ENCODE measurements at regions of chr1 and their contacts with region 1.

Region 1: DNA sequence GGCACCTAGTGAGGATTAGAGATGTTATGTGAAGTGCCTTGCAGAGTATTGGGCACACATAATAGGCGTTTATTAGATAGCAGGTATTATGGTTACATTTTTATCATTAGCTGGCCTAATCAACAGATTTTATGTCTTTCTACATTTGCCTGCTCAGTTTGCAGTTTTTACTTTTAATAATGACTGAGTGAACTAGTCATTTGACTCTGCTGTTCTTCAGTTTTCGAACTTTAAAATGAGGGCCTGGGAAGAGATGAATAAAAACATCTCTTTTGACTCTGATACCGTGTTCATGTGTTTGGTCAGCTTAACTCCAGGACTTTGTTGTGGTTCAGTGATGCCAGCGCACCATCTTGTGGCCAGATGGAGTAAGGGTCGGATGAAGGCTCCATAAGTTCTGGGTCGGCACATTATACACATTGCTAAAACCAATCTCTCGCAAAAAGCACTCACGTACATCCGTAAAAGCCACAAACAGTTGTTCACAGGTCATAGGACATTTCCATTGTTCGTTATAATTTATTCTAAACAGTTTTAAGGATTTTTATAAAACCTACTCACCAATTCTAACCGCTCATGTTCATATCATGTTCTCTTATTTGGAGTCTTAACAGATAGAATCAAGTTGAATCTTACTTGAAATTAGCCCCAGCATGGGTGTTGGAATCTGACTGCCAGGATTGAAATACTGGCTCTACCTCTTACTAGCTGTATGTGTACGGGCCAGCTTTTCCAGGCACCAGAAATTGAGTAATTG is 78.4 kb upstream of the GPR88 start:
- DNase-seq: peak; percentile 69 to 73
- ATAC-seq: peak; percentile 70 to 91 (median 88)
- H3K4me3 ChIP-seq: no peak overlapping the region
- H3K27ac ChIP-seq: no peak overlapping the region
- H3K4me1 ChIP-seq: peaks cover 0 to 24% (median 8%) of the 10 kb centered on the region in 9 donors
- H3K27me3 ChIP-seq: no peaks in the 10 kb centered on the region
- CTCF ChIP-seq: peak; percentile 74 to 93 (median 86)

Region 2: DNA sequence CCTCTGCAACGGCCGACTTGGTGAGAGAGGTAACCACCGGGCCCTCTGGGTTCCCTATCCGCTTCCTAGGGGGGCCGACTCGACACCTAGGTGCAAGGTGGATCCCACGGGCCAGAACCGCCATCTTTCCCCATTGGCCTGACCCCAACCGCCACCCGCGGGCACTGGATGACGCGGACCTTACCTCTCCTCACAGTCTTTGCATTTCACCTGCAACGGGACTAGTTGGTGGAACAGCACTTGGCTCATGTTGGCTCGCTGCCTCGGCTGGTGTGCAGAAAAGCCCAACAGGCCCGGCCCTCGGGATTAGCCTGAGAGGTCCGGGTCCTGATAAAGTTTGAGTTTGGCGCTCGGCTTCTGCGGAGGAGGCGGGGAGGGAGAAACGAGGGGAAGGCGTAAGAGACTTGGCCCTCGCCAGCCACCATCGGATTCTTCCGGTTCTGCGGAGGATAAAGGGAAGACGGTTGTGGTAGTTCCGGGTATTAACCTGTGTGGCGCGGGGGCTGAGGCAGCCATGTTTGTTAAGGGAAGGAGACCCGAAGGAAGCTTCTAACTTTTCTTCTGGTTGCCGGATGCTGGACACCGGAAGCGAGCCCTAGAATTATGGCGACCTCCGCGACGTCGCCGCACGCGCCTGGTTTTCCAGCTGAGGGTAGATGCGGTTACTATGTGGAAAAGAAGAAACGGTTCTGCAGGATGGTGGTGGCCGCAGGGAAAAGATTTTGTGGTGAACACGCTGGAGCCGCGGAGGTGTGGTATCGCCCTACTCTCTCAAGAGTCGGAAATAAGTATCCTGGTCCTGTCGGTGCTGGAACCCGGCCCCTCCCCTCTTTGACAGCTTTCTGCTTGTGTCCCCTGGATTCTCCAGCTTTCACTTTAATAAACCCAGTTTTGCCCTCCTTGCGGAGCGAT is 326.7 kb before region 1 on chr1 and contains the starts of genes SASS6 and TRMT13:
- intact Hi-C with region 1: loop called in 1 of 10 experiments (anchors 10 kb)
- DNase-seq: peak; percentile 94 to 98
- ATAC-seq: peak; percentile 99 to 100 (median 100)
- H3K4me3 ChIP-seq: peak within 1 kb of the TSS; percentile 65 to 93 (median 82)
- H3K27ac ChIP-seq: peak within 1 kb of the TSS in 9 of 10 donors; percentile 59 to 86 (median 76)
- H3K4me1 ChIP-seq: peaks cover 5 to 41% (median 27%) of the 10 kb centered on the region in 9 donors
- H3K27me3 ChIP-seq: no peaks in the 10 kb centered on the region
- CTCF ChIP-seq: peak in 1 of 9 donors; percentile 17
- total RNA-seq, gene SASS6: 0.95 to 2.7 (median 1.7) TPM
- total RNA-seq, gene TRMT13: 4.1 to 8.2 (median 5.4) TPM

Region 3: GRCh38 chr1:100265931-100266740 is 193.4 kb before region 1 on chr1 and contains the start of gene RTCA:
- intact Hi-C with region 1: loop called in 3 of 10 experiments (anchors 10 kb)
- DNase-seq: peak; percentile 96 to 98
- ATAC-seq: peak; percentile 99 to 100 (median 100)
- H3K4me3 ChIP-seq: peak within 1 kb of the TSS; percentile 59 to 99 (median 96)
- H3K27ac ChIP-seq: peak within 1 kb of the TSS in 9 of 10 donors; percentile 79 to 97 (median 88)
- H3K4me1 ChIP-seq: peaks cover 4 to 42% (median 35%) of the 10 kb centered on the region in 9 donors
- H3K27me3 ChIP-seq: no peaks in the 10 kb centered on the region
- CTCF ChIP-seq: no peak
- total RNA-seq, gene RTCA: 30.1 to 44.8 (median 36.9) TPM

Region 4: GRCh38 chr1:100292711-100293110 is 166.8 kb before region 1 on chr1:
- intact Hi-C with region 1: loop called in 3 of 10 experiments (anchors 5 kb)
- DNase-seq: no peak
- ATAC-seq: peak in 5 of 8 donors; percentile 47 to 80 (median 69)
- H3K4me3 ChIP-seq: no peak overlapping the region
- H3K27ac ChIP-seq: peak overlapping the region in 5 of 10 donors; percentile 5 to 62 (median 25)
- H3K4me1 ChIP-seq: peaks cover 0 to 10% (median 0%) of the 10 kb centered on the region in 9 donors
- H3K27me3 ChIP-seq: no peaks in the 10 kb centered on the region
- CTCF ChIP-seq: no peak

Region 5: DNA sequence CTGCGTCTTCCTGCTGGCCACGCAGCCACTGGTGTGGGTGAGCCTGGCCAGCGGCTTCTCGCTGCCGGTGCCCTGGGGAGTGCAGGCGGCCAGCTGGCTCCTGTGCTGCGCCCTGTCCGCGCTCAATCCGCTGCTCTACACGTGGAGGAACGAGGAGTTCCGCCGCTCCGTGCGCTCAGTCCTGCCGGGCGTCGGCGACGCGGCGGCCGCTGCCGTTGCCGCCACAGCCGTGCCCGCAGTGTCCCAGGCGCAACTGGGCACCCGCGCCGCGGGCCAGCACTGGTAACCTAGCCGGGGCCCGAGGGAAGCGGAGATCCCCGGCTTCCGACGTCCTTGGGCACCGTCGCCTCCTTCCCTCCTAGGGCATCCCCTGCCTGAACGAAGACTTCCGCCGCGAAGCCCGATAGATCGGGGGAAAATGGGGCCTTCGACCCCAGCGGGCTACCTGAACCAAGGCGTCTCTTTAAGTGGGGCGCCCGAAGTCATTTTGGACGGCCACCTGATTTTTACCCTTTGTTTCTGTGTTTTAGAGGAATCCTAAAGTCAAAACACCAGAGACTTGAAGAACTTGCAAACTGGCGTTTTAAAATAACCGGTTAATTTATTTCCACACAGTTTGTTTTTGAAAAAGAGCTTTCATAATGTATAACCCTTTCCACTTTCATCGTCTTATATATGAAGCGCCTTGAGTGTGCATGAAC is 80.5 kb after region 1 on chr1:
- intact Hi-C with region 1: loop called in 2 of 10 experiments (anchors 2 to 10 kb)
- DNase-seq: peak in 1 of 2 donors; percentile 37
- ATAC-seq: peak; percentile 18 to 78 (median 46)
- H3K4me3 ChIP-seq: peak overlapping the region in 9 of 10 donors; percentile 39 to 61 (median 51)
- H3K27ac ChIP-seq: no peak overlapping the region
- H3K4me1 ChIP-seq: peaks cover 5 to 31% (median 8%) of the 10 kb centered on the region in 9 donors
- H3K27me3 ChIP-seq: peaks cover 6 to 64% (median 54%) of the 10 kb centered on the region in 7 donors
- CTCF ChIP-seq: no peak

Region 6: DNA sequence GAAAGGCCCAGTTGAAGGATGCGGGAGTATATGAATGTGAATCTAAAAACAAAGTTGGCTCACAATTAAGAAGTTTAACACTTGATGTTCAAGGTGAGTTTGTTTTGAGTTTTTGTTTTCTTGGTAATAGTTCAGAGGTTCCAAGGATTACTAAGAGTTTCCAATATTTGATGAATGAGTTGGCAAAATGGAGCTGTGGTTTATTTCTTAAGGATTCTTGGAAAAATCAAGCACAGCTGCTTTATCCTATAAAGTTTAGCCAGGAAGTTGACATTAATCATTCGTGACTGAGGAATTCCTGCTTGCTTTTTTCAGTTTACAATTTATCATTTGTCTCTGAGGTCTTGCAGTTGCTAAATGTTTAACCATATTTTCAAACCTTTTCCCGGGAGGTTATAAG is 275.1 kb after region 1 on chr1:
- intact Hi-C with region 1: loop called in 1 of 10 experiments (anchors 10 kb)
- DNase-seq: no peak
- ATAC-seq: peak in 3 of 8 donors; percentile 18 to 40 (median 28)
- H3K4me3 ChIP-seq: no peak overlapping the region
- H3K27ac ChIP-seq: peak overlapping the region in 3 of 10 donors; percentile 29 to 52 (median 38)
- H3K4me1 ChIP-seq: peaks cover 0 to 20% (median 3%) of the 10 kb centered on the region in 9 donors
- H3K27me3 ChIP-seq: no peaks in the 10 kb centered on the region
- CTCF ChIP-seq: no peak